HepG2 (cell line): ENCODE measurements at regions of chr5 and their contacts with region 1.

Region 1: DNA sequence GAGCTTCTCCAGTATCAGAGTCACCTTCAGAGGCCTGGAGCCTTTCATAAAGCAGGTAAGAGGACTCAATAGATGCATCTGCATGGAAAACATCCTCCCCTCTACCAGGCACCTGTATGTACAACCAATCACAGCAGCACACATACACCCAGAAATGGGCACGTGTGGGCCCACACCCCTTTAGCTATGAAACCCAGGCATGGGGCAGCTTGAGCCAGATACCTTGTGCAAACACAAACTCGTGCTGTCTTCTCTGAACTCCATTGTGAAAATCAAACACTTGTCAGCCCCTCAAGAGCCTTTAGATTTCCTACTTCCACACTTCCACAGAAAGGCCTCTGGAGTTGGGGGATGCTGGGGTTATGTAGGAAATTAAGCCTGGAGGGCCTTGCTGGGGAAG is 1.1 kb upstream of the CSF2 start:
- DNase-seq: no peak
- ATAC-seq: no peak
- H3K4me3 ChIP-seq: no peak overlapping the region
- H3K27ac ChIP-seq: no peak overlapping the region
- H3K4me1 ChIP-seq: peaks cover 36% of the 10 kb centered on the region
- H3K27me3 ChIP-seq: peaks cover 6 to 47% of the 10 kb centered on the region in 2 experiments; a peak in 3 of 5 replicates
- CTCF ChIP-seq: no peak
- EP300 ChIP-seq: no peak
- POLR2A ChIP-seq: no peak
- RAD21 ChIP-seq: no peak

Region 2: GRCh38 chr5:132094393-132095076 is 22.0 kb after region 1 on chr5:
- CTCF ChIA-PET with region 1: no interaction called
- POLR2A ChIA-PET with region 1: no interaction called
- in situ Hi-C with region 1: no loop called
- intact Hi-C with region 1: loop called (anchors 1 kb)
- DNase-seq: peak; percentile 25
- ATAC-seq: peak; percentile 96
- H3K4me3 ChIP-seq: no peak overlapping the region
- H3K27ac ChIP-seq: no peak overlapping the region
- H3K4me1 ChIP-seq: peaks cover 12% of the 10 kb centered on the region
- H3K27me3 ChIP-seq: peaks cover 0 to 4% of the 10 kb centered on the region in 2 experiments; a peak in 1 of 5 replicates
- CTCF ChIP-seq: no peak
- EP300 ChIP-seq: no peak
- POLR2A ChIP-seq: no peak
- RAD21 ChIP-seq: no peak